ENCODE measurements at regions of chr2 and their contacts with region 1.

Region 1: DNA sequence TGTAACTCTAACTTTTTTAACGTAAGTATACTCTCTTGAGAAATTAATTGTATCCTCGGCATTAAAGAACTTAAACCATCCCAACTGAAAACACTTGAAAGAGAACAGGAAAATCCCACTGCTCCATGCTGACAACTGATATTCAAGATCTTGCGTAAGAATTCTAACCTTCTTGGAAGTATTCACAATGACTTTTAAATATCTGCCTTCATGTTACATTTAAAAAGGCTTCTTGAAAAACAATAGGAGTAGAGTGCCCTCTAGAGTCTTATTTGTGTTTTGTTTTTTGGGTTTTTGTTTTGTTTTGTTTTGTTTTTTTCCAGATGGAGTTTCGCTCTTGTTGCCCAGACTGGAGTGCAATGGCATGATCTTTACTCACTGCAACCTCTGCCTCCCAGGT is 65.4 kb upstream of the DNAJC10 start:
- DNase-seq: peak in 1 of 2 experiments; percentile 65
- H3K4me3 ChIP-seq: no peak overlapping the region
- H3K4me1 ChIP-seq: no peaks in the 10 kb centered on the region
- H3K27me3 ChIP-seq: no peaks in the 10 kb centered on the region

Region 2: GRCh38 chr2:182186132-182186735 is 464.5 kb before region 1 on chr2:
- in situ Hi-C with region 1: loop called (anchors 5 kb)
- DNase-seq: peak in 1 of 2 experiments; percentile 39
- H3K4me3 ChIP-seq: no peak overlapping the region
- H3K4me1 ChIP-seq: no peaks in the 10 kb centered on the region
- H3K27me3 ChIP-seq: no peaks in the 10 kb centered on the region

Measured in HAP-1 (cell line).